ENCODE measurements at regions of chr12 and their contacts with region 1.

Region 1: GRCh38 chr12:4648501-4649357 is at the starts of genes AKAP3 and NDUFA9:
- DNase-seq: peak; percentile 85
- H3K4me3 Mint-ChIP-seq: peak within 1 kb of the TSS; percentile 97
- H3K27ac Mint-ChIP-seq: peak within 1 kb of the TSS; percentile 79
- H3K4me1 Mint-ChIP-seq: peaks cover 54% of the 10 kb centered on the region
- H3K27me3 Mint-ChIP-seq: no peaks in the 10 kb centered on the region
- total RNA-seq, gene AKAP3: 3.1 to 3.4 TPM
- total RNA-seq, gene NDUFA9: 95.1 to 112 TPM

Region 2: GRCh38 chr12:4538207-4539160 is 110.2 kb before region 1 on chr12 and contains the start of gene RAD51AP1:
- CTCF ChIA-PET with region 1: no interaction called
- POLR2A ChIA-PET with region 1: interaction called, 15 read pairs
- DNase-seq: peak; percentile 96
- H3K4me3 Mint-ChIP-seq: peak within 1 kb of the TSS; percentile 99
- H3K27ac Mint-ChIP-seq: peak within 1 kb of the TSS; percentile 92
- H3K4me1 Mint-ChIP-seq: peaks cover 46% of the 10 kb centered on the region
- H3K27me3 Mint-ChIP-seq: no peaks in the 10 kb centered on the region
- total RNA-seq, gene RAD51AP1: 43.5 to 45.6 TPM

Region 3: GRCh38 chr12:4604684-4605193 is 44.0 kb before region 1 on chr12:
- CTCF ChIA-PET with region 1: interaction called, 13 read pairs
- POLR2A ChIA-PET with region 1: interaction called, 10 read pairs
- DNase-seq: peak; percentile 84
- H3K4me3 Mint-ChIP-seq: peak overlapping the region; percentile 91
- H3K27ac Mint-ChIP-seq: peak overlapping the region; percentile 68
- H3K4me1 Mint-ChIP-seq: peaks cover 12% of the 10 kb centered on the region
- H3K27me3 Mint-ChIP-seq: peaks cover 20% of the 10 kb centered on the region

Region 4: DNA sequence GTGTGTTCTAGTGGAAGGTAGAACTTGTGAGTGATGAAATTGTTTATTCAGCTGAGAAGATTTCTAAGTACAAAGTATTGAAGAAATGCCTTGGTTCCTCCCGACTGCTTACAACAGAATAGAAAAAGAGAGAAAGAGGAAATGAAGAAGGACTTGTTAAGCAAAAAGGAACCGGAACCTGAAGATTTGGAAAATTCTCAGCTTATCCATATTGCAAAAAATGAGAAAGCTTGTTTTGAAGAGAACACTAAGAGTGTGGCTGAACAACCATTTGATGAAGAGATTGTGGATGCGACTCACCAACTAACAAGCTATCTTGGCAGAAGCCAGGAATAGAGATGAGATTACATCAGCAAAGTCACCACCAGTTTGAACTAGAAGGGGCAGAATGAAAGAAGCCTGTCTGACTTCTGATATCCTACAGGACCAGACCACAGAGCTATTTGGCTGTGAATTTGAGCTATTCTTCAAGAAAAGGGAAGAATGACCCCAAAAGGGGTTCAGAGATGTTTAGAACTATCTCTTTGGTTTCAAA is 15.3 kb after region 1 on chr12:
- CTCF ChIA-PET with region 1: no interaction called
- POLR2A ChIA-PET with region 1: interaction called, 10 read pairs
- DNase-seq: no peak
- H3K4me3 Mint-ChIP-seq: no peak overlapping the region
- H3K27ac Mint-ChIP-seq: no peak overlapping the region
- H3K4me1 Mint-ChIP-seq: no peaks in the 10 kb centered on the region
- H3K27me3 Mint-ChIP-seq: no peaks in the 10 kb centered on the region

Measured in activated CD4-positive, alpha-beta memory T cell treated with anti-CD3 and anti-CD28 coated beads, Interleukin-2, amount 10 ng/mL, durations not matched to agents 7 days and 5 days (primary cell).